ENCODE measurements at regions of chr20 and their contacts with region 1.

Region 1: DNA sequence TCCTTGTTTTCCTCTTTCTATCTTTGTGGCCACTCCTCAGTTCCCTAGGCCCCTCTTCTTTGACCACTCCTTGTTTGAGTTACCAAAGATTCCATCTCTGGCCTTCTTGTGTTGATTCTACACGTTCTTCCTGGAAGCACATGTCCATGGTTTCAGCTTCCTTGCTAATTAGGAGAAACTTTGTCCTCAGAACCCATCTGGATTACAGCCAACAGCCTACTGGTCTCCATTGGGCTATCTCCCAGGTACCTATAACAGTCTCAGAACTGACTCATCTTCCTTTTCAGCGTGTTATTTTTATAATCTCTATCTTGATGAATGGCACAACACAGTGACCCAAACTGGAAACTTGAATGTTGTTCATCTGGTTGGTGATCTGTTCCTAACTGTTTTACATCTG is 17.5 kb downstream of the PTPRA start:
- DNase-seq: no peak
- ATAC-seq: peak in 1 of 4 donors; percentile 26
- H3K4me3 ChIP-seq: no peak overlapping the region
- H3K27ac ChIP-seq: no peak overlapping the region
- H3K4me1 ChIP-seq: peaks cover 0 to 32% (median 14%) of the 10 kb centered on the region in 12 donors
- H3K27me3 ChIP-seq: no peaks in the 10 kb centered on the region
- CTCF ChIP-seq: no peak
- POLR2A ChIP-seq: no peak

Region 2: GRCh38 chr20:2626853-2627541 is 263.7 kb before region 1 on chr20:
- intact Hi-C with region 1: no loop called
- DNase-seq: no peak
- ATAC-seq: no peak
- H3K4me3 ChIP-seq: no peak overlapping the region
- H3K27ac ChIP-seq: no peak overlapping the region
- H3K4me1 ChIP-seq: no peaks in the 10 kb centered on the region
- H3K27me3 ChIP-seq: peaks cover 0 to 19% (median 0%) of the 10 kb centered on the region in 9 donors
- CTCF ChIP-seq: no peak
- POLR2A ChIP-seq: no peak

Region 3: DNA sequence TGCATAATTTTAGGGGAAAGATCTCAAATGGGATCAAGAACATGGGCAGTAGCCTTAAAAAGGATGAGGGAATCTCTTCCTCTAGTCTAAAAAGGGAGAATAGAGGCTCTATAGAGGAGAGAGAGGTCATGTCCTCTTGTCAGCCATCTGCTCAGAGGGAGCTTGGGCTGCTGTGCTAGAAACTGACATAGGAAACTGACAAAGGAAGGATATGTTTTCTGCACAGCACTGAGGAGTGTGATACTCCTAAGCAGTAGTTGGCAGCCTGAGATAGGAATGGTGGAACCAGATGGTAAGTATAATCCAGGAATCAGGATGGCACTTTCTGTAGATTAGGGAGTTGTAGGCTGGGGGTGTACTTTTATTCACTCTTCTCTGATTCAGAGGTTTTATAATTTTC is 41.8 kb after region 1 on chr20:
- intact Hi-C with region 1: loop called in 1 of 10 experiments (anchors 5 kb)
- DNase-seq: no peak
- ATAC-seq: peak in 1 of 4 donors; percentile 53
- H3K4me3 ChIP-seq: no peak overlapping the region
- H3K27ac ChIP-seq: no peak overlapping the region
- H3K4me1 ChIP-seq: peaks cover 0 to 10% (median 4%) of the 10 kb centered on the region in 12 donors
- H3K27me3 ChIP-seq: no peaks in the 10 kb centered on the region
- CTCF ChIP-seq: no peak
- POLR2A ChIP-seq: no peak

Region 4: DNA sequence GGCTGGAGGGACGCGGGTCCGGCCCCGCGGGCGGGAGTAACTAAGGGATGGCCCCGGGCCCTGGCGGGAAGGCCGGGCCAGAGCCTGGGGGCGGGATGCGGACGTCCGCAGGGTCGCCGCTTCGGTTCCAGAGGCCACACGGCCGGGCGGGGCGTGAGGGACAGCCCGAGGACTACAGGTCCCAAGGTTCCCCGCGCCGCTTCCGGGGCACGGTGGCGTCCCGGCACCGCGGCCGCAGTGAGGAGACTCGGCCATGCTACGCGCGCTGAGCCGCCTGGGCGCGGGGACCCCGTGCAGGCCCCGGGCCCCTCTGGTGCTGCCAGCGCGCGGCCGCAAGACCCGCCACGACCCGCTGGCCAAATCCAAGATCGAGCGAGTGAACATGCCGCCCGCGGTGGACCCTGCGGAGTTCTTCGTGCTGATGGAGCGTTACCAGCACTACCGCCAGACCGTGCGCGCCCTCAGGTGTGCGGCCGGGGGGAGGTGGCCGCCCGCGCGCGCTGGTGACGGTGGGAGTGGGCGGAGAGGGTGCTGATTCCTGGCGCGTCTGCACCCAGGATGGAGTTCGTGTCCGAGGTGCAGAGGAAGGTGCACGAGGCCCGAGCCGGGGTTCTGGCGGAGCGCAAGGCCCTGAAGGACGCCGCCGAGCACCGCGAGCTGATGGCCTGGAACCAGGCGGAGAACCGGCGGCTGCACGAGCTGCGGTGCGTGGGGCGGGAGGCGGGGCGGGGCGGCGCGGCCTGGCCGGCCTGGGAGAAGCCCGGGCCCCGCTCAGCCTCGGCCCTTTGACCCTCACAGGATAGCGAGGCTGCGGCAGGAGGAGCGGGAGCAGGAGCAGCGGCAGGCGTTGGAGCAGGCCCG is 155.3 kb after region 1 on chr20 and contains the start of gene MRPS26:
- intact Hi-C with region 1: no loop called
- DNase-seq: peak; percentile 92 to 97 (median 93)
- ATAC-seq: peak; percentile 86 to 96 (median 94)
- H3K4me3 ChIP-seq: peak within 1 kb of the TSS; percentile 58 to 99 (median 88)
- H3K27ac ChIP-seq: peak within 1 kb of the TSS; percentile 86 to 97 (median 92)
- H3K4me1 ChIP-seq: peaks cover 0 to 39% (median 26%) of the 10 kb centered on the region in 12 donors
- H3K27me3 ChIP-seq: no peaks in the 10 kb centered on the region
- CTCF ChIP-seq: no peak
- POLR2A ChIP-seq: peak in 1 of 2 donors; percentile 79
- total RNA-seq, gene MRPS26: 36.5 to 83.4 (median 50.9) TPM

Region 5: GRCh38 chr20:3239026-3239866 is 348.5 kb after region 1 on chr20 and contains the start of gene SLC4A11:
- intact Hi-C with region 1: no loop called
- DNase-seq: peak; percentile 59 to 81 (median 63)
- ATAC-seq: peak in 3 of 4 donors; percentile 64 to 78 (median 66)
- H3K4me3 ChIP-seq: peak within 1 kb of the TSS; percentile 50 to 86 (median 66)
- H3K27ac ChIP-seq: peak within 1 kb of the TSS in 4 of 12 donors; percentile 8 to 38 (median 22)
- H3K4me1 ChIP-seq: peaks cover 0 to 29% (median 17%) of the 10 kb centered on the region in 12 donors
- H3K27me3 ChIP-seq: peaks cover 5 to 54% (median 38%) of the 10 kb centered on the region in 9 donors
- CTCF ChIP-seq: no peak
- POLR2A ChIP-seq: no peak
- total RNA-seq, gene SLC4A11: 0.11 to 1.0 (median 0.22) TPM in 8 of 9 donors, not detected in the other

Measured in heart left ventricle (tissue), 16 donors.